ENCODE measurements at regions of chr6 and their contacts with region 1.

Region 1: DNA sequence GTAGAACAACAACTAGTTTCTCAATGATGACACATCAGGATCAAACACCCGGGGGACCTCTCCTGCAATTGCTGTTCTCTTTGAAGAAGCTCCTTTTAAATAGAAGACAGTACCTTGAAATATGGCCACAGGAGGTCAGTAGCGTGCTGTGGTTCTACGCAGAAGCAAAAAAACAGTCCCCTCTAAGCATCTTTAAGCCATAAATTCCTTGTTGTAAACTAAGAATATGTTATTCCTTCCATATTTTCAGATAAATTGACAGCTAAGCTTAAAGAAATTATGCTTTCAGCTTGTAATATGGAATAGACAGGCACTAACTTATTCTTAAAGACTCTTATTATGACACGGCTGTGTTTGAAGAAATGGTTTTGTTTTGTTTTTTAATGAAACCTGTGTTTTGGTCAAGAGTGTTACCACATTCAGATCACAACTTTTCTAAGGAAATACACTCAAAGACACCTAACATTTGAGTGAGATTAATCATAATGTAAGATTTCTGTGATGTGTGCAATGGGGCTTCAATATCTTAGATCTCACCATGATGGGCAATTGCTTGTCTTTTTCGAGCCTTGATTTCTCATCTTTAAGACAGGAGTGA is 49.7 kb upstream of the IL20RA start:
- DNase-seq: peak; percentile 75
- H3K4me3 ChIP-seq: no peak overlapping the region
- H3K27ac ChIP-seq: no peak overlapping the region
- H3K4me1 ChIP-seq: no peaks in the 10 kb centered on the region
- H3K27me3 ChIP-seq: peaks cover 3 to 4% of the 10 kb centered on the region in 2 experiments
- CTCF ChIP-seq: peak; percentile 50 to 53
- POLR2A ChIP-seq: no peak

Region 2: DNA sequence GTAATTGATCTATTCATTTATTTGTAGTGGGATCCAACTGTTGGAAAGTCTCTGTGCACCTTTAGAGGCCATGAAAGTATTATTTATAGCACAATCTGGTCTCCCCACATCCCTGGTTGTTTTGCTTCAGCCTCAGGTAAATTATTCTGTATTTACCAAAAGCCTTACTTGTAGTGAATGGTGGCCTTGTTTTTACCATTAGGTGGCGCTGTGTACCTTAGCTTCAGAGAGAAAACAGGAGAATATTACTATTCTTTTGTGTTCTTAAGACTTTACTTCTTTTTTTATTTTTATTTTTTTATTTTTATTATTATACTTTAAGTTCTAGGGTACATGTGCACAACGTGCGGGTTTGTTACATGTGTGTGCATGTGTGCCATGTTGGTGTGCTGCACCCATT is 248.5 kb before region 1 on chr6:
- CTCF ChIA-PET with region 1: interaction called, 4 read pairs
- POLR2A ChIA-PET with region 1: no interaction called
- dilution Hi-C with region 1: no loop called
- intact Hi-C with region 1: loop called (anchors 5 kb)
- DNase-seq: peak; percentile 55
- H3K4me3 ChIP-seq: no peak overlapping the region
- H3K27ac ChIP-seq: no peak overlapping the region
- H3K4me1 ChIP-seq: no peaks in the 10 kb centered on the region
- H3K27me3 ChIP-seq: no peaks in the 10 kb centered on the region
- CTCF ChIP-seq: peak; percentile 62 to 64
- POLR2A ChIP-seq: no peak

Region 3: DNA sequence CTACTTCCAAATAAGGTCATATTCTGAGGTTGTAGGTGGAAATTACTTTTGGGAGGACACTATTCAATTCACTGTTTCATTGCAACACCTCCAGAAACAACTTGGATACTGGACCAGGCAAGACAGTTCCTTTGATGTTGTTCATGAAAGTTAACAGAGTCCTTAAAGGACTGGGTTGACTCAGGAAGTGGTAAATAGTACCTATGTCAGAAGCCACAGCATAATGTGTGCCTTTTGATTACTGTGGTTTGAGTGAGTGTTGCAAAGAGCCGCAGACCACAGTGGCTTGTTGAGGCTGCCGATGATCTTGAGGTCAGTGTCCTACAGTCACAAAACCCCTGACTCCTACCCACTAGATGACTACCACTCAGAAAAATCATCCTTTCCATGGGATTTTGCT is 60.7 kb before region 1 on chr6:
- CTCF ChIA-PET with region 1: no interaction called
- POLR2A ChIA-PET with region 1: no interaction called
- dilution Hi-C with region 1: no loop called
- intact Hi-C with region 1: no loop called
- DNase-seq: no peak
- H3K4me3 ChIP-seq: no peak overlapping the region
- H3K27ac ChIP-seq: no peak overlapping the region
- H3K4me1 ChIP-seq: no peaks in the 10 kb centered on the region
- H3K27me3 ChIP-seq: no peaks in the 10 kb centered on the region
- CTCF ChIP-seq: no peak
- POLR2A ChIP-seq: no peak

Region 4: GRCh38 chr6:137271245-137272183 is 177.0 kb after region 1 on chr6:
- CTCF ChIA-PET with region 1: interaction called, 15 read pairs
- POLR2A ChIA-PET with region 1: no interaction called
- dilution Hi-C with region 1: no loop called
- intact Hi-C with region 1: loop called (anchors 1 kb)
- DNase-seq: peak; percentile 72
- H3K4me3 ChIP-seq: no peak overlapping the region
- H3K27ac ChIP-seq: no peak overlapping the region
- H3K4me1 ChIP-seq: no peaks in the 10 kb centered on the region
- H3K27me3 ChIP-seq: peaks cover 3 to 8% of the 10 kb centered on the region in 2 experiments
- CTCF ChIP-seq: peak; percentile 57 to 69
- POLR2A ChIP-seq: no peak

Region 5: GRCh38 chr6:137370871-137371633 is 276.5 kb after region 1 on chr6:
- CTCF ChIA-PET with region 1: interaction called, 4 read pairs
- POLR2A ChIA-PET with region 1: no interaction called
- dilution Hi-C with region 1: no loop called
- intact Hi-C with region 1: loop called (anchors 5 kb)
- DNase-seq: no peak
- H3K4me3 ChIP-seq: no peak overlapping the region
- H3K27ac ChIP-seq: no peak overlapping the region
- H3K4me1 ChIP-seq: no peaks in the 10 kb centered on the region
- H3K27me3 ChIP-seq: no peaks in the 10 kb centered on the region
- CTCF ChIP-seq: no peak
- POLR2A ChIP-seq: no peak

Region 6: DNA sequence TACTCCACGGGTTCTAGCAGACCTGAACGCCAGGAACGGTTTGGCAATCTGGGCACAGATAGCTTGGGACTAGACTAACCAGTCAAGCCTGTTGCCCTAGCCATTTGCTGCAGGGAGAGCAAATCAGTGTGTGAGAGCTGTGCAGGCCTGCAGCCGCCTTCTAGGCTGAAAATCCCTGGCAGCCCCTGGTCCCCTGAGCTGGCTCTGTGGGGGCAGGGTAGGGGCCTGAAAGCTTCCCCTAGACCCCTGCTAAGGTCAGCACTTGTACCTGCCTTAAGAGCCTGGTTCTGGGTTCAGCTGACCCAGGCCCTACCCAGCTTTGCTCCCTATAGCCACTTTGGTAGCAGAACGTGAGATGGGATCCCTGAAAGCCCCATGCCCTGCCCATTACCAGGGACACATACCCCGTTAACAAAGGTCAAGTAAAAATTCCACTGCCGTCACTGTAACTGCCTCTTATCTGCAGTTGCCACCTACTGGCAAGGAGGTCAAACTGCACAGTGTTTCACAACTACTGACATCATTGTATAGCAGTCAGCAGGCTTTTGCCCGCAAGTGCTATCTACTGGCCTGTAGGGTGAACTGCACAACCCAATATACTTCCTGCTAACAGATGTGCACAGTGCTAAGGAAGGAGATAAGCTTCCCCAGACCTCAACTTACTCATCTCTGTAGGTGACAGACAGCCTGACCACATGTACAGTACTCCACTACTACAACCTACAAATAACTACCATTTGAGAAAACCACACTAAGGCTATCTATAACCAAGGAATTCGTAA is 494.7 kb after region 1 on chr6:
- CTCF ChIA-PET with region 1: no interaction called
- POLR2A ChIA-PET with region 1: no interaction called
- dilution Hi-C with region 1: no loop called
- intact Hi-C with region 1: loop called (anchors 1 kb)
- DNase-seq: peak; percentile 15
- H3K4me3 ChIP-seq: no peak overlapping the region
- H3K27ac ChIP-seq: no peak overlapping the region
- H3K4me1 ChIP-seq: no peaks in the 10 kb centered on the region
- H3K27me3 ChIP-seq: no peaks in the 10 kb centered on the region
- CTCF ChIP-seq: peak; percentile 35
- POLR2A ChIP-seq: no peak